PC-3 (cell line): ENCODE measurements at regions of chr6 and their contacts with region 1.

Region 1: GRCh38 chr6:30489081-30490025 is at the start of gene HLA-E:
- DNase-seq: peak; percentile 99
- ATAC-seq: peak; percentile 91
- H3K4me3 ChIP-seq: peak within 1 kb of the TSS; percentile 90
- H3K27ac ChIP-seq: peak within 1 kb of the TSS; percentile 38
- H3K4me1 ChIP-seq: peaks cover 8% of the 10 kb centered on the region
- H3K27me3 ChIP-seq: no peaks in the 10 kb centered on the region
- CTCF ChIP-seq: no peak
- total RNA-seq, gene HLA-E: 131 and 161 TPM in 2 replicates

Region 2: DNA sequence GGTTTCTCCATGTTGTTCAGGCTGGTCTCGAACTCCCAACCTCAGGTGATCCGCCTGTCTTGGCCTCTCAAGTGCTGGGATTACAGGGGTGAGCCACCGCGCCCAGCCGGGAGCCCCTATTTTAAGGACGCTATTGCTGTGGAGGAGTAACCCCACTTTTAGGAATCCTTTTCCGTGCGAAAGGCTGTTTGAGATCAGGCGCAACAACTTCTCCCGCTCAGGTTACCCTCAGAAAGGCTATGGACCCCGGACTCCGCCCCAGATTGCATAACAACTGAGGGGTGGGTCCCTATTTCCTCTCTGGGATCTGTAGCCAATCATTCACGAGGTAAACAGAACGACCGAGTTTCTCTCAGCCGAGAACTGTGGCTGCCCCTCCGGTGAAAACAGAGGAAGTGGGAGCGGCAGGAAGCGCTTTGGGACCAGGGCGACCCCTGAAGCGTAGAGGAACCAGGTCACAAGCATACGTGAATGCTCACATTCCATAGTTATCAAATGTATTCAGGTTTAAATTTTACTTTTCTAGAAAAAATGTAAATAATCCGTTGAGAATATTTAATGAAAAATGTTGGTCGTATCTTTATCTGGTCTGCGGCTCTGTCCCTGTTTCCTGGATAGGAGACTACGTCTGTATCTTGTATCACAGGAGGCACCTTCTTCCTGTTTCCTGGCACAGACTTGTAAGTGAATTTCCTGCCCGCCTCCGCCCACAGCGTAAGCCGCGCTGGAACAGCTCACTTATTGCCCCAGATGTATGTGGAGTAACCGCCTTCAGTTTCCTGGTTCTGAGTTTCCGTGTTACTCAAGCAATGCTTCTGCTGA is 26.8 kb after region 1 on chr6:
- CTCF ChIA-PET with region 1: no interaction called
- POLR2A ChIA-PET with region 1: interaction called, 11 read pairs
- intact Hi-C with region 1: no loop called
- DNase-seq: peak; percentile 87
- ATAC-seq: peak; percentile 81
- H3K4me3 ChIP-seq: peak overlapping the region; percentile 64
- H3K27ac ChIP-seq: peak overlapping the region; percentile 75
- H3K4me1 ChIP-seq: peaks cover 17% of the 10 kb centered on the region
- H3K27me3 ChIP-seq: no peaks in the 10 kb centered on the region
- CTCF ChIP-seq: no peak

Region 3: DNA sequence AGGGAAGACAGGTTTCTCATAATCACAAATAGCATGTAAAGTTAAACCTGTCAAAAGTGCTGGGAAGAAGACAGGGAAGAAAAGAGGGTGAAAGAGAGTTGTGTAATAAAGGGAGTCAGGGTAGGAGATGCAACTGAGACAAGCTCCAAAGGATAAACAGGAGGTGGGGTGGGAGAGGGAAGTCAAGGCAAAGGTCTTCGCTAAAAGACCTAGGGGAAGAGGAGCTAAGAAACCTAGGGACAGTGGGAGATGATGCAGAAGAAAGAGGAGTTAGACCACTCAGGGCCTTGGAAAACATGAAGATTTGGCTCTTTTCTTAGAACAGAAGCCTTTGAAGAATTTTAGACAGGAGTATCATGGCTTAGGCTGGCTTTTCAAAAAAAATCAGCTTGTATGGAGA is 74.8 kb after region 1 on chr6:
- CTCF ChIA-PET with region 1: interaction called, 13 read pairs
- POLR2A ChIA-PET with region 1: no interaction called
- intact Hi-C with region 1: no loop called
- DNase-seq: no peak
- ATAC-seq: no peak
- H3K4me3 ChIP-seq: no peak overlapping the region
- H3K27ac ChIP-seq: no peak overlapping the region
- H3K4me1 ChIP-seq: no peaks in the 10 kb centered on the region
- H3K27me3 ChIP-seq: no peaks in the 10 kb centered on the region
- CTCF ChIP-seq: no peak

Region 4: DNA sequence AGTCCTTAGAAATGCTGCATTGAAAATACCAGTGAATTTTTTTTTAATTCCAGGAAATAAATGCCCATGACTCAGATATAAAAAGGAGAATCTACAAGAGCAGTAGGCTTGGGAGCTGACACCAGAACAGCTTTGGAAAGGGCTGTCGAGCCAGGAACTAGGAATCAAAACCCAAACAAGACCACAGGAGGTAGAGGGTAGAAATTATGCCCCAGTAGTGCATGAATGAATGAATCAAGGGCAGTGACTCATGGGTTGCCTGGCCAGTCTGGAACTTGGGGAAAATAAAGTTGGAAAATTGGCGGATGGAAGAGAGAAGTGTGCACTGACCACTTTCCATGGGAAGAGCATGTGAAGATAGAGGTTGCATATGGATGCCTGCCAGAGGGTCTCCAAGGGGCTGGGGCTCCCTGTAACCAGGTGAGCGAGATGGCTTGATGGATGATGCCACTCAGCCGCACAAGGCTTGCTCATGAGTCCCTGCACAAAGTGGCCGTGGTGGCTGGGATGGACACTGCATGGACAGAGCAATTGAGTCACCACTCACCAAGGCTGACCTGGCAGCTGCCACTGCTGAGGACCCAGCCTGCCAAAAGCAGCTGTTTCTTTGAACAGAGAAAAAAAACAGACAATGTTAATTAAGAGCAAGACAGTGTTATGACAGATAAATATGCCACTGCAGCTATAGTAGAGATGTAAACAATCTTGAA is 1024.3 kb after region 1 on chr6:
- CTCF ChIA-PET with region 1: no interaction called
- POLR2A ChIA-PET with region 1: no interaction called
- intact Hi-C with region 1: no loop called
- DNase-seq: peak; percentile 32
- ATAC-seq: no peak; the same call in 1 of the 2 replicates
- H3K4me3 ChIP-seq: no peak overlapping the region
- H3K27ac ChIP-seq: no peak overlapping the region
- H3K4me1 ChIP-seq: peaks cover 14% of the 10 kb centered on the region; the same call in 1 of the 2 replicates
- H3K27me3 ChIP-seq: no peaks in the 10 kb centered on the region
- CTCF ChIP-seq: no peak